Activated naive CD4-positive, alpha-beta T cell treated with anti-CD3 and anti-CD28 coated beads for 36 hours (primary cell): ENCODE measurements at regions of chr4 and their contacts with region 1.

Region 1: GRCh38 chr4:39353478-39354253 is 12.5 kb downstream of the RFC1 start:
- DNase-seq: peak; percentile 44
- H3K4me3 Mint-ChIP-seq: peak overlapping the region; percentile 55
- H3K27ac Mint-ChIP-seq: peak overlapping the region; percentile 95
- H3K4me1 Mint-ChIP-seq: peaks cover 83% of the 10 kb centered on the region
- H3K27me3 Mint-ChIP-seq: no peaks in the 10 kb centered on the region

Region 2: DNA sequence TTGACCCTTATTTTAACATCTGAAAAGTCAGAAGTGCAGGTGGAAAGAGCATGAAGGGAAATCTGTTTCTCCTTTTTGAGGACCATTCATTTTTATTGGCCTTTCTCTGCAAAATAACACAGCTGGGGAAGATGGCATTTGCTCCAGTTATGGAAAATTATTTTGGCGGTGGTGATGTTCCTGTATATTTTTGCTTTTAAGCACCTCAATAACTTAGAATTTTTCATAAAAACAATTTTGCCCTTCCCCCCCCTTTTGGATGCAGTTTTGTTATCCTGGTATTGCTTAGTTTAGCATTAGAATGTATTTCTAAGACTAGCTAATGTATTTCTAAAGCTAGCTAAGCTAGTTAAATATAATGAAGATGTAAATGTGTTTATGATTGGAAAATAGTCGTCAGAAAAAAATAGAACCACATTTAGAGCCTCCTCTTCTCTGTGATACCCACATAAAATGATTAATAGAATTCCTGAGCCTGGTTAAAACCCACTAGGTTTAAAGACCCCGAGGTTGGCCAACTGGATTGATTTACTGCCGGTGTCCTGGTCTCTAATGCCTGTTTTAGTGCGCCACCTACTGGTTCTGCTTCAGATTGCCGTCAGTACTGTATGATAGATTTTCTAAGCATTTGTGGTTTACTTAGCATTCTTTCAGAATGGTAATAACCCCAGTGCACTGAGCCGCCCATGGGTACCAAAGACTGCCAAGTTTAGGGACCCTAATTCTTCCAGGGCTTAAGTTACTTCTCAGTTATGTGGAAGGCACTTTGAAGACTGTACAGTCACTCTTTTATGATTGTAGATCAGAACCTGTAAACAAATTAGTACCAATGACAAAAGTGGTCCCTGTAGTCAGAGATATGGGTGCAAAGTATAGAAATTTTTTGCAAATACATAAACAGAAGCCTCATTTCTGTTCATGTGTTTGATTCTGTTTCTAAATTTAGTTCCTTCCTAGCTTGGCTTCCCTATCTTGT is 678.2 kb before region 1 on chr4:
- CTCF ChIA-PET with region 1: no interaction called
- intact Hi-C with region 1: loop called (anchors 5 kb)
- DNase-seq: peak; percentile 95
- H3K4me3 Mint-ChIP-seq: peak overlapping the region; percentile 71
- H3K27ac Mint-ChIP-seq: peak overlapping the region; percentile 82
- H3K4me1 Mint-ChIP-seq: peaks cover 85% of the 10 kb centered on the region
- H3K27me3 Mint-ChIP-seq: no peaks in the 10 kb centered on the region

Region 3: GRCh38 chr4:38889143-38889542 is 464.5 kb before region 1 on chr4:
- CTCF ChIA-PET with region 1: no interaction called
- intact Hi-C with region 1: loop called (anchors 1 kb)
- DNase-seq: no peak
- H3K4me3 Mint-ChIP-seq: peak overlapping the region; percentile 46
- H3K27ac Mint-ChIP-seq: peak overlapping the region; percentile 88
- H3K4me1 Mint-ChIP-seq: peaks cover 23% of the 10 kb centered on the region
- H3K27me3 Mint-ChIP-seq: no peaks in the 10 kb centered on the region

Region 4: GRCh38 chr4:39044364-39044955 is 309.2 kb before region 1 on chr4:
- CTCF ChIA-PET with region 1: no interaction called
- intact Hi-C with region 1: loop called (anchors 2 kb)
- DNase-seq: peak; percentile 99
- H3K4me3 Mint-ChIP-seq: peak overlapping the region; percentile 83
- H3K27ac Mint-ChIP-seq: peak overlapping the region; percentile 92
- H3K4me1 Mint-ChIP-seq: peaks cover 51% of the 10 kb centered on the region
- H3K27me3 Mint-ChIP-seq: no peaks in the 10 kb centered on the region

Region 5: GRCh38 chr4:39341075-39341725 is 12.5 kb before region 1 on chr4:
- CTCF ChIA-PET with region 1: no interaction called
- intact Hi-C with region 1: no loop called
- DNase-seq: no peak
- H3K4me3 Mint-ChIP-seq: no peak overlapping the region
- H3K27ac Mint-ChIP-seq: no peak overlapping the region
- H3K4me1 Mint-ChIP-seq: peaks cover 37% of the 10 kb centered on the region
- H3K27me3 Mint-ChIP-seq: no peaks in the 10 kb centered on the region

Region 6: DNA sequence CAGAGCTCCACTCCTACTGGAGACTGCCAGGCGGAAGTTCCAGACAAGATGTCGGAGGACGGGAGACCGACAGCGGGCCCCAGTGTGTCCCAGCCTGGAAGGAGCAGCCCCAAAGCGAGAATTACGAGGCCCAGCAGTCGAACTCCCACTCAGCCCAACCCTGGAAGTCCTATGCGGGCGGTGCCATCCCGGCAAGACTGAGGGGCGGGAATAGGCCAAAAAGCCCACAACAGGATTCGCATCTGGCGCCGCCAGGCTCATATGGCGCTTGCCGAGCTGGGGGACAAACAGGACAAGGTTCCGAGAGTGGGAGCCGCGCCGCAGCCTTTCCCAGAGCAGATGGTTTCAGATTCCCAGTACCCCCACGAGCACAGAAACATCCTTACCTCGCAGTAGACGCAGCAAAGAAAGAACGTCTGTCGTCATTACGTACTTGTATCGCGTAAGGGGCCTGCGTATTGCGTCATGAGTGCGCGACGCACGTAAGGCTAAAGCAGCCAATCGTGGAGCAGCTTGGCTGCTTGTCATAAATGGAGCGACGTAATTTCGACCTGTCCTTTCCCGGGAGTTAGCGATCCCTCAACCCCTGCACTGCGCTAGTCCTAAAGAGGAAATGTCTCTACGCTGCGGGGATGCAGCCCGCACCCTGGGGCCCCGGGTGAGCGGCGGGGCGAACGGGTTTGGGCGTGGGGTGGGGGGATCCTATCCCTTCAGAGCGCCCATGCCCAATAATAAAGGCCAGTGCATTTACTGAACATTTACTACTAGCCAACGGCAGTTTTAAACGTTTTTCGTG is 105.0 kb after region 1 on chr4 and contains the starts of genes LIAS and RPL9:
- CTCF ChIA-PET with region 1: no interaction called
- intact Hi-C with region 1: loop called (anchors 1 kb)
- DNase-seq: peak; percentile 95
- H3K4me3 Mint-ChIP-seq: peak within 1 kb of the TSS; percentile 91
- H3K27ac Mint-ChIP-seq: peak within 1 kb of the TSS; percentile 98
- H3K4me1 Mint-ChIP-seq: peaks cover 48% of the 10 kb centered on the region
- H3K27me3 Mint-ChIP-seq: no peaks in the 10 kb centered on the region
- total RNA-seq, gene LIAS: 30.9 to 31.7 TPM
- total RNA-seq, gene RPL9: 2,383 to 2,428 TPM

Region 7: GRCh38 chr4:39697740-39698423 is 344.2 kb after region 1 on chr4 and contains the start of gene UBE2K:
- CTCF ChIA-PET with region 1: no interaction called
- intact Hi-C with region 1: loop called (anchors 5 kb)
- DNase-seq: peak; percentile 85
- H3K4me3 Mint-ChIP-seq: peak within 1 kb of the TSS; percentile 98
- H3K27ac Mint-ChIP-seq: peak within 1 kb of the TSS; percentile 98
- H3K4me1 Mint-ChIP-seq: peaks cover 32% of the 10 kb centered on the region
- H3K27me3 Mint-ChIP-seq: no peaks in the 10 kb centered on the region
- total RNA-seq, gene UBE2K: 60.6 to 69.5 TPM

Region 8: GRCh38 chr4:40316782-40317635 is 963.3 kb after region 1 on chr4:
- CTCF ChIA-PET with region 1: no interaction called
- intact Hi-C with region 1: loop called (anchors 2 kb)
- DNase-seq: peak; percentile 71
- H3K4me3 Mint-ChIP-seq: peak overlapping the region; percentile 86
- H3K27ac Mint-ChIP-seq: peak overlapping the region; percentile 100
- H3K4me1 Mint-ChIP-seq: peaks cover 49% of the 10 kb centered on the region
- H3K27me3 Mint-ChIP-seq: no peaks in the 10 kb centered on the region